ENCODE measurements at regions of chr3 and their contacts with region 1.

Region 1: GRCh38 chr3:128123538-128124368 is at the start of gene RUVBL1:
- DNase-seq: peak; percentile 92 to 99 (median 96)
- ATAC-seq: peak; percentile 92
- H3K4me3 ChIP-seq: peak within 1 kb of the TSS; percentile 82 to 90
- H3K4me3 Mint-ChIP-seq: peak within 1 kb of the TSS; percentile 98
- H3K27ac ChIP-seq: peak within 1 kb of the TSS; percentile 86 to 96
- H3K27ac Mint-ChIP-seq: peak within 1 kb of the TSS; percentile 98
- H3K4me1 ChIP-seq: peaks cover 19% of the 10 kb centered on the region
- H3K4me1 Mint-ChIP-seq: peaks cover 27% of the 10 kb centered on the region
- H3K27me3 ChIP-seq: no peaks in the 10 kb centered on the region
- H3K27me3 Mint-ChIP-seq: no peaks in the 10 kb centered on the region
- CTCF ChIP-seq: no peak
- total RNA-seq, gene RUVBL1: 5.1 to 5.6 TPM

Region 2: GRCh38 chr3:128051837-128052594 is 71.7 kb before region 1 on chr3 and contains the start of gene SEC61A1:
- CTCF ChIA-PET with region 1: no interaction called
- POLR2A ChIA-PET with region 1: interaction called, 5 read pairs
- intact Hi-C with region 1: loop called (anchors 1 to 2 kb)
- DNase-seq: peak; percentile 87 to 97 (median 95)
- ATAC-seq: peak; percentile 93
- H3K4me3 ChIP-seq: peak within 1 kb of the TSS; percentile 92 to 95
- H3K4me3 Mint-ChIP-seq: peak within 1 kb of the TSS; percentile 99
- H3K27ac ChIP-seq: peak within 1 kb of the TSS; percentile 78 to 85
- H3K27ac Mint-ChIP-seq: peak within 1 kb of the TSS; percentile 98
- H3K4me1 ChIP-seq: peaks cover 35% of the 10 kb centered on the region
- H3K4me1 Mint-ChIP-seq: peaks cover 43% of the 10 kb centered on the region
- H3K27me3 ChIP-seq: no peaks in the 10 kb centered on the region
- H3K27me3 Mint-ChIP-seq: no peaks in the 10 kb centered on the region
- CTCF ChIP-seq: no peak
- total RNA-seq, gene SEC61A1: 125 to 131 TPM

Region 3: GRCh38 chr3:128112357-128112968 is 11.3 kb before region 1 on chr3:
- CTCF ChIA-PET with region 1: interaction called, 4 read pairs
- POLR2A ChIA-PET with region 1: interaction called, 17 read pairs
- intact Hi-C with region 1: no loop called
- DNase-seq: peak in 7 of 9 experiments; percentile 24 to 86 (median 61)
- ATAC-seq: peak; percentile 92
- H3K4me3 ChIP-seq: no peak overlapping the region
- H3K4me3 Mint-ChIP-seq: peak overlapping the region; percentile 22
- H3K27ac ChIP-seq: peak overlapping the region; percentile 28 to 84
- H3K27ac Mint-ChIP-seq: peak overlapping the region; percentile 94
- H3K4me1 ChIP-seq: peaks cover 18% of the 10 kb centered on the region
- H3K4me1 Mint-ChIP-seq: peaks cover 48% of the 10 kb centered on the region
- H3K27me3 ChIP-seq: no peaks in the 10 kb centered on the region
- H3K27me3 Mint-ChIP-seq: no peaks in the 10 kb centered on the region
- CTCF ChIP-seq: no peak

Measured in CD8-positive, alpha-beta T cell (primary cell).